Right ventricle myocardium inferior (tissue), 1 donor: ENCODE measurements at regions of chr11 and their contacts with region 1.

Region 1: DNA sequence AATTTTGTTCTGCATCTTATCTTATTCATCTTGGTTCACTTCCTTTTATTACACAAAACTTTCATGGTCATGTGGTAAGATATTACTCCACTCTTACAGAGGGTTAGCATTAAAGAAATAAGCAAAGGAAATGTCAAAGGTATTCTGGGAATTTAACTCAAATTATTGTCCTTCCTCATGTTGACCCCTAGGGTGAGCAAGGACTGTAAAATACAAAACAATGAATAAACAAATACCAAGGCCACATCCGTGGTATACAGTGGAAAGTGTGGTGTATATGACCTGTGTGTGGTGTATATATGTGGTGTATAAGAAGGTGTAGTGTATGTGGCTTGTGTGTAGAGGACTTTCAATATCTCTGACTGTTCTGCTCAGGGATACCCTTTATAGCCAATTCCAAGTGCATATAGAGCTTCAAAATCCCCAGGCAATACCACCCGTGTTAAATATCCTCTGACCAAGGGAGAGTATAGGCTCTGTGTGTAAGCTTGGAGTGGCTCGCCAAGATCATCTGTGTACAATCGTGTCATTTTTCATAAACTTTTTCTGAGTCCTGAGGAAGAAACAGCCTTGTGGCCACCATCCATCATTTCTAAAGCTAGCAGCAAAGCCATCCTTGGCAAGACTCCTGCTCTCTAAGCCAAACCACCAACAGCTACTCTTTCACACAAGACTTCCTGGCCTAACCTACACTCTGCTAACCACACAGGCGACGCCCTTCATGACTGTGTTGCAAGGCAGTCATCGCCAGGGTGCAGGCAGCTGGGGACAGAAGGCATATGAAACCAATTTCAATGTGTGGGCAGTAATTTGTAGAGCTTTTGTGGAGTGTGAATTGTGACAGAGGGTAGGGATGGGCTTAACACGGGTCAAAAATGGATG is 548.0 kb downstream of the ETS1 start:
- DNase-seq: peak; percentile 71
- ATAC-seq: peak; percentile 63

Region 2: DNA sequence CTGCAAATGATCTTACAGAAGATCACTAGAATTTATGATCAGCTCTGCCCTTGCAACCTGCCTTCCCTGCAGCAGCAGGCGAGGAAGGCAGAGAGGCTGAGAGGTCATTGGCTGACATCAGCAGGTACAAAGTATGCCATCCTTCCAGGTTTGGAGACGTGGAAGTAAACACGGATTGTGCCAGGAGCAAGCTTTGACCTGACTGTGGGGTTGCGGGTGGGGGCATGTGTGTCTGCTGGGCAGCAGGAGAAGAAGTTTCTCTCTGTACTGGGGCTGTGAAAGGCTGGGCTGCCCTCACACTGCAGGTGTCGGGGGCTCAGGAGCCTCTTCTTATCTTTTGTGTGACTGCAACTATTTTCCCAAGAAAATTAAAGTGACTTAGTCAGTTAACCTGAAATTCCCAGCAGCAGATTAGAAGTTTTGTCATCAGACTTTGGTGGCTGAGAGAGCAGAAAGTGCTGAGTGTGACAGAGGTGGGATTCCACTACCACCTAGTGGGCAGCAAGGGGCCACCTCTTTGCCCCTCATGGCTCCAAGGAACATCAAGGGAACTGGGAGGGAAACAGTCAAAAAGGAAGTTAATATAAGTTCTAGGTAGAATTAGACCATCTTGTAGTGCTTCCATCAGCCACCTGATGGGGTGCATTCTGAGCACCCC is 17.9 kb before region 1 on chr11:
- intact Hi-C with region 1: no loop called
- DNase-seq: no peak
- ATAC-seq: no peak

Region 3: GRCh38 chr11:128157423-128158298 is 118.3 kb after region 1 on chr11:
- intact Hi-C with region 1: loop called (anchors 5 kb)
- DNase-seq: no peak
- ATAC-seq: peak; percentile 69

Region 4: GRCh38 chr11:128630367-128631230 is 591.2 kb after region 1 on chr11:
- intact Hi-C with region 1: loop called (anchors 10 kb)
- DNase-seq: peak; percentile 93
- ATAC-seq: peak; percentile 95

Region 5: GRCh38 chr11:128859563-128860441 is 820.4 kb after region 1 on chr11:
- intact Hi-C with region 1: loop called (anchors 10 kb)
- DNase-seq: peak; percentile 89
- ATAC-seq: peak; percentile 81

Region 6: GRCh38 chr11:128956401-128957201 is 917.2 kb after region 1 on chr11:
- intact Hi-C with region 1: loop called (anchors 10 kb)
- DNase-seq: no peak
- ATAC-seq: peak; percentile 69